Motor neuron (in vitro differentiated cells): ENCODE measurements at regions of chr9 and their contacts with region 1.

Region 1: DNA sequence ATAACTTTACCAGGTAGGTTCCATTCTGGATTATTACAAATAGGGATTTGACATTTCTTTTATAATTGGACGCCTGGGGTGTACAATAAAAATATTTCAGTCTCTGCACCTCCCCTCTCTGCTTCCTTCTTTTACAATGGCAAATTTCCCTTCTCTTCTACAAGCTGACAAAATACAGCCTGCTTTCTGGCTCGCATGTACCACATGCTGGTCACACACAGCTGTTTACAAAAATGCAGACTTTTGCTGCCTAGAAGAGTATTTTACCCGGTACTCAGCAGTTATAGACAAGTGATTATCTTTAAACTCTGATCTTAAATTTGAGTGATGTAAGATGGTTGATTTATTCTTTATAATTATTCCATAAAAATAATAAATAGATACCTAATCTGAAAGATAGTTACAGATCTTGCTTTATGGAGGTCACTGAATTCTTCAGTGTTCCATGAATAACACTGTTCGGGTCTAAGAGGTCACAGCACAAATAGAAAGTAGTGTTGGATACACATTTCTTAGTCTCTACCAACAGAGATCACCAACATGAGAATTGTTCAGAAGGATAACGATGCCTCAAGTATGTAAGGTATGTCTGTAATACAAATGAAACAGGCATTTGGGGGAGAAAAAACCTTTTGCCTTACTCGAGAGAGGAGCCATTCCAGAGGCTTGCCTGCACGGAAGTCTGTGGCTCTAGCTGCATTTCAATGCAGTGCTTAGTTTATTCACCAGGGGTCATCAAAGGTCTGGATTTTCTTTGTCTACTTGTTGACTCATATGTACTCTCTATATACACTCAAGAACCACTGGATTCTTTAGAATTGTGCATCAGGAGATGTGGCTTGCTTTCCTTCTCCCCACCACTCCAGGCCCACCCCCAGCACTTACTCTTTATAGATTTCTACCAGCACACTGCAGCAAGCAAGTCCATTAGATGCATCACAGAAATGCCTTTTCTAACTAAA is 206.6 kb upstream of the RFX3 start:
- ATAC-seq: peak; percentile 100
- H3K4me3 ChIP-seq: no peak overlapping the region
- H3K27ac ChIP-seq: no peak overlapping the region
- H3K4me1 ChIP-seq: peaks cover 6 to 10% of the 10 kb centered on the region in 2 donors

Region 2: DNA sequence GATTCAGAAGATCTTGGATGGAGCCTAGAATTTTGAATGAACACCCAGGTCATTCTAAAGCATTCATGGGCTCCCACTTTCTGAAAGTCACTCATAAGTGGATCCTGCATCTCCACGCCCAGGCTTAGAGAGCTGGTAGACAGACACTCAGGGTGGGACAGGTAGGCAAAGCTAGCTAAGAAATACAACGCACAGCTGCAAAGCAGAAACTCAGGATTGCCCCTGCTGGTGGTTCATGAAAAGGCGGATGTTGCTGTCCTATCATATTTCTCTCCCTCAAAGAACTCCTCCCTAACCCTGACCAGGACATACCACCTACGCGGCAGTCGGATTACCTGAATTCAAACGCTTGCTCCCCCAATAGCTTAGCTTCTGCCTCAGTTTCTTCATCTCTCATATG is 341.0 kb after region 1 on chr9:
- in situ Hi-C with region 1: loop called in 2 of 9 experiments (anchors 25 kb)
- ATAC-seq: no peak
- H3K4me3 ChIP-seq: no peak overlapping the region
- H3K27ac ChIP-seq: no peak overlapping the region
- H3K4me1 ChIP-seq: peaks cover 0 to 7% of the 10 kb centered on the region in 2 donors

Region 3: GRCh38 chr9:4228606-4229005 is 496.2 kb after region 1 on chr9:
- in situ Hi-C with region 1: loop called in 3 of 9 experiments (anchors 10 to 25 kb)
- ATAC-seq: peak; percentile 35 to 90 (median 74)
- H3K4me3 ChIP-seq: no peak overlapping the region
- H3K27ac ChIP-seq: no peak overlapping the region
- H3K4me1 ChIP-seq: no peaks in the 10 kb centered on the region

Region 4: DNA sequence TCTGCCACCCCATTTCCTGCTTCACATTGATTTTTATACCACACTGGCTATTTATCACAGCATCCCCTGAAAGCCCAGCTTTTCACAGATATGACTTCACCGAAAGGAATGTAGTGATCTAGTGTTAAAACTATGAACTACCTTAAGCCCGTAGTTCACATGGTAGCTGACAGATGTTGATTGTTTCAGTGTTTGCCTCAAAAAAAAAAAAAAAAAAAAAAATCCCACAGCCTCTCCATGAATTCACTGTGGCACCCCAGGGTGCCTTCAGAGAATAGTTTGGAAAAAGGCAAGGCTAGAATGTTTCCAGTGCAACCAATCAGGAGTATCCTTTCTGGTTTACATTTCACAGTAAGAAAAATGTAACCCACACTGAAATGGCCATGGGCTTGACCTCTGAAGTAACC is 530.4 kb after region 1 on chr9:
- in situ Hi-C with region 1: loop called in 1 of 9 experiments (anchors 25 kb)
- ATAC-seq: peak in 5 of 8 experiments; percentile 31 to 71 (median 45)
- H3K4me3 ChIP-seq: no peak overlapping the region
- H3K27ac ChIP-seq: no peak overlapping the region
- H3K4me1 ChIP-seq: no peaks in the 10 kb centered on the region

Region 5: GRCh38 chr9:4339357-4339756 is 607.0 kb after region 1 on chr9:
- in situ Hi-C with region 1: loop called in 3 of 9 experiments (anchors 25 kb)
- ATAC-seq: peak in 6 of 8 experiments; percentile 7 to 92 (median 62)
- H3K4me3 ChIP-seq: no peak overlapping the region
- H3K27ac ChIP-seq: no peak overlapping the region
- H3K4me1 ChIP-seq: peaks cover 4 to 6% of the 10 kb centered on the region in 2 donors

Region 6: GRCh38 chr9:4366591-4367330 is 634.4 kb after region 1 on chr9:
- in situ Hi-C with region 1: loop called in 1 of 9 experiments (anchors 25 kb)
- ATAC-seq: peak in 2 of 8 experiments; percentile 20 to 35
- H3K4me3 ChIP-seq: no peak overlapping the region
- H3K27ac ChIP-seq: no peak overlapping the region
- H3K4me1 ChIP-seq: no peaks in the 10 kb centered on the region